ENCODE measurements at regions of chr3 and their contacts with region 1.

Region 1: GRCh38 chr3:170180908-170181879 is at the start of gene PHC3:
- DNase-seq: peak; percentile 97
- H3K4me3 Mint-ChIP-seq: peak within 1 kb of the TSS; percentile 98
- H3K27ac Mint-ChIP-seq: peak within 1 kb of the TSS; percentile 100
- H3K4me1 Mint-ChIP-seq: peaks cover 24% of the 10 kb centered on the region
- H3K27me3 Mint-ChIP-seq: no peaks in the 10 kb centered on the region
- total RNA-seq, gene PHC3: 54.7 and 56.4 TPM in 2 replicates

Region 2: GRCh38 chr3:169772897-169773828 is 408.0 kb before region 1 on chr3 and contains the start of gene MYNN:
- intact Hi-C with region 1: loop called (anchors 2 kb)
- DNase-seq: peak; percentile 98
- H3K4me3 Mint-ChIP-seq: peak within 1 kb of the TSS; percentile 99
- H3K27ac Mint-ChIP-seq: peak within 1 kb of the TSS; percentile 100
- H3K4me1 Mint-ChIP-seq: peaks cover 31% of the 10 kb centered on the region
- H3K27me3 Mint-ChIP-seq: no peaks in the 10 kb centered on the region
- total RNA-seq, gene MYNN: 15.9 and 17.2 TPM in 2 replicates

Region 3: GRCh38 chr3:170037463-170038433 is 143.4 kb before region 1 on chr3 and contains the start of gene GPR160:
- intact Hi-C with region 1: loop called (anchors 5 kb)
- DNase-seq: peak; percentile 95
- H3K4me3 Mint-ChIP-seq: peak within 1 kb of the TSS; percentile 87
- H3K27ac Mint-ChIP-seq: no peak within 1 kb of the TSS
- H3K4me1 Mint-ChIP-seq: peaks cover 16% of the 10 kb centered on the region
- H3K27me3 Mint-ChIP-seq: peaks cover 6% of the 10 kb centered on the region
- total RNA-seq, gene GPR160: 3.4 and 3.6 TPM in 2 replicates

Region 4: GRCh38 chr3:170221924-170222646 is 40.9 kb after region 1 on chr3 and contains the start of gene PRKCI:
- intact Hi-C with region 1: loop called (anchors 1 kb)
- DNase-seq: peak; percentile 96
- H3K4me3 Mint-ChIP-seq: peak within 1 kb of the TSS; percentile 89
- H3K27ac Mint-ChIP-seq: peak within 1 kb of the TSS; percentile 94
- H3K4me1 Mint-ChIP-seq: peaks cover 23% of the 10 kb centered on the region
- H3K27me3 Mint-ChIP-seq: peaks cover 4% of the 10 kb centered on the region
- total RNA-seq, gene PRKCI: 19.7 and 32.3 TPM in 2 replicates

Region 5: GRCh38 chr3:170357176-170357919 is 176.2 kb after region 1 on chr3 and contains the start of gene SKIL:
- intact Hi-C with region 1: loop called (anchors 1 kb)
- DNase-seq: peak; percentile 98
- H3K4me3 Mint-ChIP-seq: peak within 1 kb of the TSS; percentile 79
- H3K27ac Mint-ChIP-seq: peak within 1 kb of the TSS; percentile 95
- H3K4me1 Mint-ChIP-seq: peaks cover 27% of the 10 kb centered on the region
- H3K27me3 Mint-ChIP-seq: peaks cover 7% of the 10 kb centered on the region
- total RNA-seq, gene SKIL: 23.3 TPM in 2 replicates

Region 6: GRCh38 chr3:170469151-170470062 is 288.2 kb after region 1 on chr3:
- intact Hi-C with region 1: no loop called
- DNase-seq: no peak
- H3K4me3 Mint-ChIP-seq: no peak overlapping the region
- H3K27ac Mint-ChIP-seq: no peak overlapping the region
- H3K4me1 Mint-ChIP-seq: peaks cover 3% of the 10 kb centered on the region
- H3K27me3 Mint-ChIP-seq: peaks cover 25% of the 10 kb centered on the region